ENCODE measurements at regions of chr13 and their contacts with region 1.

Region 1: DNA sequence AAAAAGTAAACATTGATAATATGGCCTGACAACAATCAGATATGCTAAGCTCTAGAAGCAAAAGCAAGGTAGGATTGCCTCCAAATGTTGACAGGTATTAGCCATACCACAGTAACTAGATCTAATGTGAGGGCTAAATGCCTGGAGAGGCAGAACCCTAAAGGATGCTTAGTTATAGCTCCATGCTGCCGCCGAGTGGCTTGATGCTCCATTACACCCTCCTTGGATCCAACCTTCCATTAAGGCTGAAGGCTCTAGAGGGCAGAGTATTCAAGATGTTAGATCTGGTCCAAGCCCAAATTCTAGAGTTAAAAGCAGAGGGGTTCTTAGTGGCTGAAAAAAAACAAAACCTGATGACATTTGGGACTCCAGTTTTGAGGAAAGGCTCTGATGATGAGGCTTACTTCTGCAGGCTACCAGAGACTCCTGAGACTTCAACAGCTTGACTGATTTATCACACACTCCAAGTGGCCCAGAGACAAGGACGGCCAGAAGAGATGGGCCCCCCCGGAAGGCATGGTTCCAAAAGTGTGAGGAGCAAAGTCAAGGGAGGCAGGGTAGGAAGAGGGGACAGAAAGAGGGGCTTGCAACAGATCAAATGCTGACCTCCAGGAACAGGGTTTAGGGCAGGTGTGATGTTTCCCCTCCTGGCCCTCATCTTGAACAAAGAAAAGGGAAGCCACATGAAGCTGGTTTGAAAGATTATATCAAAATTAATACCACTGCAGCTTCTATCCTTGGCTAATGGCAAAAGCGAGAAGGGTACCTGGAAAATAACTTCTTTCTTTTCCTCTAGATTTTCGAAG is 21.9 kb upstream of the CPB2 start:
- DNase-seq: peak; percentile 68
- H3K4me3 ChIP-seq: no peak overlapping the region; a peak in 1 of 4 replicates
- H3K27ac ChIP-seq: no peak overlapping the region
- H3K4me1 ChIP-seq: peaks cover 0 to 13% of the 10 kb centered on the region in 2 experiments; a peak in 1 of 4 replicates
- H3K27me3 ChIP-seq: peaks cover 15% of the 10 kb centered on the region
- CTCF ChIP-seq: peak; percentile 84
- EP300 ChIP-seq: no peak
- RAD21 ChIP-seq: peak; percentile 94

Region 2: DNA sequence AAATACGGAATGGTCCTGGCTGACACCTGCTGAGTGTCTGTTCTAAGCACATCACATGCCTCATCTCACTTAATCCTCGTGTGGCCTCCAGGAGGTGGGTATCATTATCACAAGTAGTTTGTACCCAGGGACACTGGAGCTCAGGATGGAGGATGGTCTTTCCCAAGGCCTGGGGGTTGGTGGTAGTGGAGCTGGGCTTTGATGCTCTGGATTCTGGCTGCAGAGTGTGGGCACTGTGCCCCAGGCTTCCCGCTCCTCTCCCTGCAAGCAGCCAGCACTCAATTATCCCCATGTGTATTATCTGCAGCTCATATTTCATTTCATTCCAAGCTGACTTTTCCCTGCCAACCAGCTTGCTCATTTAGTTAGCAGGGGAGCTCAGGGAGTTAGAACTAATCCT is 327.3 kb before region 1 on chr13:
- CTCF ChIA-PET with region 1: interaction called, 57 read pairs
- POLR2A ChIA-PET with region 1: no interaction called
- DNase-seq: no peak
- H3K4me3 ChIP-seq: no peak overlapping the region
- H3K27ac ChIP-seq: no peak overlapping the region; a peak in 1 of 4 replicates
- H3K4me1 ChIP-seq: peaks cover 0 to 18% of the 10 kb centered on the region in 2 experiments; a peak in 3 of 4 replicates
- H3K27me3 ChIP-seq: no peaks in the 10 kb centered on the region
- CTCF ChIP-seq: no peak
- EP300 ChIP-seq: no peak
- RAD21 ChIP-seq: no peak

Region 3: GRCh38 chr13:46103037-46103436 is 23.7 kb before region 1 on chr13:
- CTCF ChIA-PET with region 1: interaction called, 10 read pairs
- POLR2A ChIA-PET with region 1: no interaction called
- DNase-seq: no peak
- H3K4me3 ChIP-seq: no peak overlapping the region
- H3K27ac ChIP-seq: no peak overlapping the region
- H3K4me1 ChIP-seq: peaks cover 0 to 4% of the 10 kb centered on the region in 2 experiments; a peak in 1 of 4 replicates
- H3K27me3 ChIP-seq: no peaks in the 10 kb centered on the region; the same call in 1 of the 2 replicates
- CTCF ChIP-seq: no peak
- EP300 ChIP-seq: no peak
- RAD21 ChIP-seq: no peak

Region 4: DNA sequence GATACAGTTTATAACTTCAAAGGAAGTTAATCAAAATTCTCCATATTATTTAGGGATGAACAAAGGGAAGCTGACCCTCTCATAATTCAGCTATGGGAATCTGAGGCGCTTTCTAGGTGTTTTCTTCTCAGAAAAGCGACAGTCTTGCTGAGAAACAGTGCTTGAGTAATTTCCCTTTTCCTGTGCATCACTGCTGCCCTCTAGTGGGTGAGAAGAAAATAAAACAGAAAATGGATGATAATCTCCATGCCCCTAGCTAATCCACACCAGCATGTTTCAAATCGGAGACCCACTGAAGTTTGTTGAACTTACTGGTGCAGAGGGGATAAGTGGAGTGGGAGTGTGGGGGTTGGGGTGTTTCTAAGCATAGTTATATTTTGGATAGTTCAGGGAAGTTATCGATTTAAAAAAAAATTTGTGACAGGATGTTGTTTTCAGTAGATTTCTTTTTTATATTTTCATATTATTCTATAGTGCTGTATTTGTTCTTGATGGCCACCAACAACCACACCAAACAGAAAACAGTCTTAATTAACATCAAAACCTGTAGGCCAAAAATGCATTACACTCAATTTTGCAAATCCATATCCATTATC is 33.8 kb after region 1 on chr13:
- CTCF ChIA-PET with region 1: interaction called, 13 read pairs
- POLR2A ChIA-PET with region 1: no interaction called
- DNase-seq: peak; percentile 75
- H3K4me3 ChIP-seq: no peak overlapping the region
- H3K27ac ChIP-seq: no peak overlapping the region
- H3K4me1 ChIP-seq: no peaks in the 10 kb centered on the region
- H3K27me3 ChIP-seq: no peaks in the 10 kb centered on the region
- CTCF ChIP-seq: peak; percentile 82
- EP300 ChIP-seq: no peak
- RAD21 ChIP-seq: peak; percentile 75

Region 5: GRCh38 chr13:46403851-46404732 is 277.3 kb after region 1 on chr13:
- CTCF ChIA-PET with region 1: no interaction called
- POLR2A ChIA-PET with region 1: no interaction called
- DNase-seq: no peak
- H3K4me3 ChIP-seq: no peak overlapping the region
- H3K27ac ChIP-seq: no peak overlapping the region
- H3K4me1 ChIP-seq: peaks cover 0 to 3% of the 10 kb centered on the region in 2 experiments; a peak in 2 of 4 replicates
- H3K27me3 ChIP-seq: no peaks in the 10 kb centered on the region
- CTCF ChIP-seq: no peak
- EP300 ChIP-seq: no peak
- RAD21 ChIP-seq: no peak

Measured in SK-N-SH (cell line).